ENCODE measurements at regions of chr2 and their contacts with region 1.

Region 1: DNA sequence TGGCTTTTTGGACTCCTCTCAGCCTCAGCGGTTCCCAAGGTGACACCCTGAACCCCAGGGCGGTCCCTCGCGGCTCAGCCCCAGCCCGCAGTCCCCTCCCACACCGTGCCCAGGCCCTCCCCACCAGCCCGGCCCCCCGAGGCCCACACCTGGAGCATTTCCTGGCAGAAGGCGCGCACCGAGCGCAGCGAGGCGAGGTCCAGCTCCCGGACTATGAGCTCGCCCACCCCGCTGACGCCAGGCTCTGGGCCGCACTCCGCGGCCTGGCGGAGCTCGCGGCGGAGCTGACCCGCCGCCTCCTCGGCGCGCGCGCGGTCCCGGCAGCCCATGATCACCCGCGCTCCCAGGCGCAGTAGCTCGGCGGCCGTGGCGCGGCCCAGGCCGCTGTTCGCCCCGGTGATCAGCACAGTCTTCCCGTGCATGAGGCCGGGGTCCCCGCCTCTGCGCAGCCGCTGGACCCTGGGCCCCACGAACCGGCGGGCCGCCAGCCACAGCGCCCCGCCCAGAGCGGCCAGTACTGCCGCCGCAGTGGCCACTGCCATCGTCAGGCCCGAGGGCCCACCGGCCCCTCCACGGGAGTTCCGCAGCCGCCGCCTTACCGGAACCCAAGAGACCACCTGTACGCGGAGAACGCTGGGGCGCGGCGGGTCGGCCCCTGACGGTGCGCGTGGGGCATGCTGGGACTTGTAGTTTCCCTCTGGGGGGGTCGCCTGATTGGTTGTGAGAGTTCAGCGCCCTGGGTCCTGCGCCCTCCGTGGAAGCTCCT is at the start of gene RDH14:
- DNase-seq: peak; percentile 84 to 94
- ATAC-seq: peak; percentile 88 to 96 (median 89)
- H3K4me3 ChIP-seq: peak within 1 kb of the TSS; percentile 50
- H3K4me3 Mint-ChIP-seq: peak within 1 kb of the TSS; percentile 91
- H3K27ac ChIP-seq: peak within 1 kb of the TSS; percentile 79
- H3K27ac Mint-ChIP-seq: peak within 1 kb of the TSS; percentile 91 to 93
- H3K4me1 ChIP-seq: peaks cover 12% of the 10 kb centered on the region
- H3K4me1 Mint-ChIP-seq: peaks cover 30 to 34% of the 10 kb centered on the region in 2 donors
- H3K27me3 ChIP-seq: no peaks in the 10 kb centered on the region
- H3K27me3 Mint-ChIP-seq: no peaks in the 10 kb centered on the region
- CTCF ChIP-seq: no peak
- total RNA-seq, gene RDH14: 8.7 to 13.5 (median 12.5) TPM

Region 2: GRCh38 chr2:19362755-19363473 is 802.7 kb after region 1 on chr2:
- intact Hi-C with region 1: loop called (anchors 2 kb)
- DNase-seq: peak in 1 of 2 donors; percentile 72
- ATAC-seq: peak; percentile 44 to 48 (median 48)
- H3K4me3 ChIP-seq: peak overlapping the region; percentile 46
- H3K4me3 Mint-ChIP-seq: peak overlapping the region; percentile 98
- H3K27ac ChIP-seq: no peak overlapping the region
- H3K27ac Mint-ChIP-seq: peak overlapping the region; percentile 60 to 71
- H3K4me1 ChIP-seq: peaks cover 34% of the 10 kb centered on the region
- H3K4me1 Mint-ChIP-seq: peaks cover 26 to 35% of the 10 kb centered on the region in 2 donors
- H3K27me3 ChIP-seq: peaks cover 35% of the 10 kb centered on the region
- H3K27me3 Mint-ChIP-seq: peaks cover 19 to 28% of the 10 kb centered on the region in 2 donors
- CTCF ChIP-seq: peak; percentile 34